WTC11 (cell line): ENCODE measurements at regions of chr7 and their contacts with region 1.

Region 1: GRCh38 chr7:32212321-32212720 is 142.1 kb upstream of the PDE1C start:
- DNase-seq: no peak
- ATAC-seq: no peak
- H3K4me3 Mint-ChIP-seq: no peak overlapping the region
- H3K27ac Mint-ChIP-seq: no peak overlapping the region
- H3K4me1 Mint-ChIP-seq: no peaks in the 10 kb centered on the region
- H3K27me3 Mint-ChIP-seq: peaks cover 24% of the 10 kb centered on the region
- CTCF ChIP-seq: no peak

Region 2: DNA sequence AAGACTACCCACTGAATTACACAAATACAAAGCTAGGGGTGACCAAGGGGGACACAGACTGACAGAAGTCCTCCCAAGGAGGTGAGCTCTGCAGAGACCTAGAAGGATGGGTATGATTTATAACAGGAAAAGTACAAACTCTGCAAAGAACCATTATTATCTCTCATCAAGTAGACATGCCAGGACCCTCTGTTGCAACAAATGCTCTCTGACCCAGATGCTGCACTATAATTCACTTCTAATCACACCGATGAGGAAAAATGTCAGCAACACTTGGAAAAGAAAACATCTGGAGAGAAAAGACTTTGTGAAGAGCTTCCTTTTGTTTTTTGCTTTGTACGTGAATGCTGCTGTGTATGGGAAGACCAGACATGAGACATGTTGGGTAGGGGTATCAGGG is 36.2 kb after region 1 on chr7:
- CTCF ChIA-PET with region 1: no interaction called
- POLR2A ChIA-PET with region 1: no interaction called
- DNase-seq: no peak
- ATAC-seq: no peak
- H3K4me3 Mint-ChIP-seq: no peak overlapping the region
- H3K27ac Mint-ChIP-seq: no peak overlapping the region
- H3K4me1 Mint-ChIP-seq: no peaks in the 10 kb centered on the region
- H3K27me3 Mint-ChIP-seq: peaks cover 8% of the 10 kb centered on the region; the same call in 1 of the 2 replicates
- CTCF ChIP-seq: no peak

Region 3: GRCh38 chr7:32357535-32358277 is 145.4 kb after region 1 on chr7:
- CTCF ChIA-PET with region 1: interaction called, 46 read pairs
- POLR2A ChIA-PET with region 1: no interaction called
- DNase-seq: no peak
- ATAC-seq: peak; percentile 92
- H3K4me3 Mint-ChIP-seq: no peak overlapping the region
- H3K27ac Mint-ChIP-seq: no peak overlapping the region
- H3K4me1 Mint-ChIP-seq: no peaks in the 10 kb centered on the region
- H3K27me3 Mint-ChIP-seq: peaks cover 4% of the 10 kb centered on the region
- CTCF ChIP-seq: no peak

Region 4: DNA sequence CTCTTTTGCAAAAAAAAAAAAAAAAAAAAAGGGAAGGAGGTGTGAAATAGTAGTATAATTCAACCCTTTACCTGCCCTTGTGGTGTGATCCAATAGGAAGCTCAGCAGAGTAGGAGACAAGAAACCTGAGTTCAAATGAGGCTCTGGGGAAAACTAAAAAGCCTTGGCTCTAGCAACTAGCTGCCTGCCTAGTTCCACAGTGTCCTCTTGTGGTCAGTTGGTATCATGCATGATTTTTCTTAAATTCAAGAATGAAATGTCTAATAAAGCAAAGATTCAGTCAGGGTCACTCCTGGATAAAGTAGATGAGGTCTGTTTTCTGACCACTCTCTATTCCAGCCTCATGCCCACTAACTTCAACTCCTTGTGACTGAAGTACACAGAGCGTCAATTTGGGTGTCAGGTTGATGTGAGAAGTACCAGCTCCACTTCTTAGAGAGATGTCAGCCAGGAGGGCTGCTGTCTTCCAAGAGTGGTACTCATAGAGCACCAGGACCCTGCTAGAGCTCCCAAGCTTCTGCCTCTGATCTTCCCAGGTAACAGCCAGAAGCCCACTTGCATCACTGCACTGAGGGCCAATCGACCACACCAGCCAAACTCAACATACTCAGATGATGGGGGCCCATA is 267.4 kb after region 1 on chr7:
- CTCF ChIA-PET with region 1: interaction called, 18 read pairs
- POLR2A ChIA-PET with region 1: no interaction called
- DNase-seq: no peak
- ATAC-seq: peak; percentile 64
- H3K4me3 Mint-ChIP-seq: no peak overlapping the region
- H3K27ac Mint-ChIP-seq: no peak overlapping the region
- H3K4me1 Mint-ChIP-seq: no peaks in the 10 kb centered on the region
- H3K27me3 Mint-ChIP-seq: no peaks in the 10 kb centered on the region
- CTCF ChIP-seq: peak; percentile 57

Region 5: GRCh38 chr7:32506266-32507054 is 294.1 kb after region 1 on chr7:
- CTCF ChIA-PET with region 1: no interaction called
- POLR2A ChIA-PET with region 1: no interaction called
- DNase-seq: no peak
- ATAC-seq: no peak
- H3K4me3 Mint-ChIP-seq: no peak overlapping the region
- H3K27ac Mint-ChIP-seq: no peak overlapping the region
- H3K4me1 Mint-ChIP-seq: peaks cover 12% of the 10 kb centered on the region
- H3K27me3 Mint-ChIP-seq: no peaks in the 10 kb centered on the region
- CTCF ChIP-seq: no peak